Activated T-helper 1 cell treated with anti-CD3 and anti-CD28 coated beads, Interleukin-12 subunit alpha, Interleukin-12 subunit beta, Interleukin-2, Interleukin-4 antibody, amounts not matched to agents 30 ng/mL and 10 ng/mL and 1 ng/mL, durations not matched to agents 14 hours and 24 hours and 36 hours (primary cell): ENCODE measurements at regions of chr9 and their contacts with region 1.

Region 1: DNA sequence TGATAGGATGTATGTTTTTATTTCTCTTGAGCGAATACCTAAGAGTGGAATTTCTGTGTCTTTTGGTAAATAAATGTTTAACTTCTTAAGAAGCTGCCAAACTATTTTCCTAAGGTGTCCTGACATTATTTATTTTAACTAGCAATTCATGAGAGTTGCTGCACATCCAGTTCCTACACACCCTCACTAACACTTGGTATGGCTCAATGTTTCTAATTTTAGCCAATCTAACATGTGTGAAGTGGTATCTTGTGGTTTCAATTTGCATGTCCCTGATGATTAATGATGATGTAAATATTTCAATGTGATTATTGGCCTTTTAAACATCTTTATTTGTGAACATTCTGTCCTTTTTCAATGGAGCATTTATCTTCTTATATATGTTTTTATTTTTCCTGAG is 2095.5 kb upstream of the C9orf72 start:
- DNase-seq: no peak
- H3K4me3 Mint-ChIP-seq: no peak overlapping the region
- H3K27ac Mint-ChIP-seq: no peak overlapping the region
- H3K4me1 Mint-ChIP-seq: no peaks in the 10 kb centered on the region
- H3K27me3 Mint-ChIP-seq: no peaks in the 10 kb centered on the region

Region 2: DNA sequence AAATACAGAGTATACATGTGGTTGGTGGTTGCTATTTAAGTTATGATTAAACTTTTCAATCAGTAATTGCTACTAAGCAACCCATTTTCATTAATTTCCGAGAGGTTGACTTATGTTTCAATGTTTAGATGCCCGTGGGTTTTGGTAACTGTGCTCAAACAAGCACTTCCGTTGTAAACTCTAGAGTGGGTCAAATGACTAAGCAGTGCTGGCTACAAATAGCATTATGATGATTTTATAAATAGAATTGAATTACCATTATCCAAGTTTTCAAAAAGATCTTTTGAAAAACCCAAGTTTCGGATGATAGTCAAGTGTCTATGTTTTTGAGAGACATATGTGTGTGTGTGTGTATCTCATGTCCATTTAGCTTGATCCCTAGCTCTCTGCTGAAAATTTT is 346.3 kb after region 1 on chr9:
- intact Hi-C with region 1: loop called (anchors 5 kb)
- DNase-seq: no peak
- H3K4me3 Mint-ChIP-seq: no peak overlapping the region
- H3K27ac Mint-ChIP-seq: no peak overlapping the region
- H3K4me1 Mint-ChIP-seq: no peaks in the 10 kb centered on the region
- H3K27me3 Mint-ChIP-seq: no peaks in the 10 kb centered on the region